RWPE1 (cell line): ENCODE measurements at regions of chr10 and their contacts with region 1.

Region 1: GRCh38 chr10:89384474-89385340 is 6.9 kb downstream of the IFIT1B start:
- DNase-seq: no peak
- H3K27ac ChIP-seq: no peak overlapping the region
- CTCF ChIP-seq: no peak

Region 2: DNA sequence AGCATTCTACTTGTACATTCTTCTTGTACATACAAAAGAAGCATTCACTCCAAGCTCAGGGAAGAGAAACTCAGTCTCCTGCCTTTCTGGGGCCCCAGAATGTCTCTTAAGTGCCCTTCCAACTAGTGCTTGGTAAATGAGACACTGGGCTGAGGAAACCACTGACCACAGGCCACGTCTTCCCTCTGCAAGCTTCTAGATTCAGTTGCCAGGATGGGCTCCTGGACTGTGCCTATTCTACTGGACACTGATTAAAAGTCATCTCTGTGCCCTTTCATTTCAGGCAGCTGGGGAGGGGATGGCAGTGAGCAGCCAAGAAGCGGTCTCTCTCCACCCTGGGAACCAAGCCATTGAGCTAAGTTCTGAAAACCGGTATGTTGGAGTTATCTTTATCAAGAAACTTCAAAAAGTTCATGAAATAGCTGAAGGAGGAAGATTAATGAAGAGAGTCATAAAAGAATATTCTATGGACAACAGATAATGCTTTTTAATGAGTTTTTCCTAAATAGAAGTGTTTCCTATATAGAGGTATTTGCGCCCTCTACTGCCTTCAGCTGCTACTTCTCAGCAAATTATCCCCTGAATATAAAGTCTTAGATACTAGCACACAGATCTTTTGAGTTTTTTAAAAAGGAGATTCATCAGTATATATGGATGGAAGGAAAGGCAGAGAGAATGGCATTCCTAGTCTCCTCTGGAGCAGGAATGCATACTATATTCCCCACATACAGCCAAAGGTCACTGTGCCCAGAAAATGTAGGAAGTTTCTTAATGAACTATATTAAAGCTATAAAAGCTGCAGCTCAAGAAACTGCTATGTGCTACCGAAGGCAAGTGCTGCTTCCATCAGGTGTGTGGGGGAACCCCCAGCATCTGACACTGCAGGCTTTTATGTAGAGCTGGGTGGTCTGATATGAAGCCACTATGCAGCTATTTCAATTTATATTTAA is 15.3 kb before region 1 on chr10:
- CTCF ChIA-PET with region 1: interaction called, 11 read pairs
- POLR2A ChIA-PET with region 1: no interaction called
- DNase-seq: peak; percentile 49
- H3K27ac ChIP-seq: no peak overlapping the region
- CTCF ChIP-seq: peak; percentile 43; the same call in 1 of the 2 replicates